HepG2 (cell line): ENCODE measurements at regions of chr13 and their contacts with region 1.

Region 1: GRCh38 chr13:33968520-33969507 is 150.9 kb downstream of the RFC3 start:
- DNase-seq: peak; percentile 96
- ATAC-seq: peak; percentile 97
- H3K4me3 ChIP-seq: peak overlapping the region; percentile 28 to 45 (median 40); a peak in 5 of 6 replicates
- H3K27ac ChIP-seq: peak overlapping the region; percentile 97
- H3K4me1 ChIP-seq: peaks cover 45% of the 10 kb centered on the region
- H3K27me3 ChIP-seq: no peaks in the 10 kb centered on the region
- CTCF ChIP-seq: no peak
- EP300 ChIP-seq: peak; percentile 83 to 98
- POLR2A ChIP-seq: no peak
- RAD21 ChIP-seq: no peak

Region 2: GRCh38 chr13:33728271-33729037 is 240.4 kb before region 1 on chr13:
- CTCF ChIA-PET with region 1: no interaction called
- POLR2A ChIA-PET with region 1: no interaction called
- in situ Hi-C with region 1: no loop called
- intact Hi-C with region 1: no loop called
- DNase-seq: no peak
- ATAC-seq: no peak
- H3K4me3 ChIP-seq: no peak overlapping the region
- H3K27ac ChIP-seq: no peak overlapping the region
- H3K4me1 ChIP-seq: peaks cover 16% of the 10 kb centered on the region
- H3K27me3 ChIP-seq: no peaks in the 10 kb centered on the region
- CTCF ChIP-seq: no peak
- EP300 ChIP-seq: no peak
- POLR2A ChIP-seq: no peak
- RAD21 ChIP-seq: no peak

Region 3: DNA sequence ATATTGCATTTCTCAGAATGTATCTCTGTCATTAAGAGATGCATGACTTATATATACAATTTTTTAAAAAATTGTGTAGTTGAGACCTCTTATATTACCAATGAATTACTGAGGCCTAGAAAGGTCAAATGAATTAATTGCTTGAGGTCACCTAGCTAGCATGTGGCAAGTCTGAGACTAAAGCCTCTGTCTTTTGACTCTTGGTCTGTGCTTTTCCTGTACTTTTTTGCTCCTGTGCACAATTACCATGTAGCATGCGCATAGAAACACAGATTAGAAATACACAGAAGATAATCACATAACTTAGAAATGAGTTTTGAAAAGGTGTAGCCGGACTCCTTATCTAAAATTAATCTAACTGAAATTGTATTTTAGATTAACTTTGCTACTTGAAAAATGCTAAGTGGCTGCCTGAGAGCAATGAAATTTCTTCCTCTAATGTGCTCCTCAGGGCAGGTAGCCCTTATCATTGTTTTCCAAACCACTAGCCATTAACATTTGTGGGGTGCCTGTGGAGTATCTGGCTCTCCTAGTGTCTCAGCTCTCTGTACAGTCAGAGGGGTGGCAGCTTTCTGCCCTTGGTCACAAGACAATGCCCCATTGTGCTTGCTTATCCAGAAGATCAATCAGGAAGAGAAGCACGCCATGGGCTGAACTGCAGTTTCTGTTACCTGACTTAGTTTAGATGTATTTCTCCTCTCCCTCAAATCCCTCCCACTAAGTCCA is 31.3 kb before region 1 on chr13:
- CTCF ChIA-PET with region 1: no interaction called
- POLR2A ChIA-PET with region 1: interaction called, 3 read pairs
- in situ Hi-C with region 1: no loop called
- intact Hi-C with region 1: loop called (anchors 1 kb)
- DNase-seq: peak; percentile 87
- ATAC-seq: peak; percentile 99
- H3K4me3 ChIP-seq: no peak overlapping the region
- H3K27ac ChIP-seq: peak overlapping the region; percentile 59
- H3K4me1 ChIP-seq: peaks cover 33% of the 10 kb centered on the region
- H3K27me3 ChIP-seq: no peaks in the 10 kb centered on the region
- CTCF ChIP-seq: no peak
- EP300 ChIP-seq: no peak; a peak in 1 of 4 replicates
- POLR2A ChIP-seq: no peak
- RAD21 ChIP-seq: no peak

Region 4: DNA sequence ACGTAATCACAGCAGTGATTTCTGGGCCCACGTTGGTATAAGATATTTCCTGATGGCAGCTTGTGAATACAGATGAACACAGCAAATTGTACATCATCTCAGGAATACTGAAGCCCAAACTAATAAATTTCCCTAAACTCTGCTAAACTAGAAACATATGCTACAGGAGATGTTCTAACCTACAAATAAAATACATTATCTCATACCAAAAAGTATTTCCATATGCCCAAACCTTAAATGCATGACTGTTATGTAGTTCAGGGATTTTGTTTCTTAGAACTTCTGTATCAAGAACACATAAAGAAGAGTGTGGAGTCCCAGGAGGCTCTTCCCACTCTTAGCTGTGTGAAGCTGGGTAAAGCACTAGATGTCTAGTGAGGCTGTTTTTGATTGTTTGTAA is 12.5 kb before region 1 on chr13:
- CTCF ChIA-PET with region 1: no interaction called
- POLR2A ChIA-PET with region 1: interaction called, 13 read pairs
- in situ Hi-C with region 1: no loop called
- intact Hi-C with region 1: no loop called
- DNase-seq: no peak
- ATAC-seq: no peak
- H3K4me3 ChIP-seq: no peak overlapping the region
- H3K27ac ChIP-seq: peak overlapping the region; percentile 82
- H3K4me1 ChIP-seq: peaks cover 54% of the 10 kb centered on the region
- H3K27me3 ChIP-seq: no peaks in the 10 kb centered on the region
- CTCF ChIP-seq: no peak
- EP300 ChIP-seq: no peak
- POLR2A ChIP-seq: no peak
- RAD21 ChIP-seq: no peak

Region 5: GRCh38 chr13:34003656-34004055 is 34.8 kb after region 1 on chr13:
- CTCF ChIA-PET with region 1: no interaction called
- POLR2A ChIA-PET with region 1: no interaction called
- in situ Hi-C with region 1: no loop called
- intact Hi-C with region 1: loop called (anchors 2 kb)
- DNase-seq: no peak
- ATAC-seq: no peak
- H3K4me3 ChIP-seq: no peak overlapping the region
- H3K27ac ChIP-seq: no peak overlapping the region
- H3K4me1 ChIP-seq: peaks cover 9% of the 10 kb centered on the region; the same call in 1 of the 2 replicates
- H3K27me3 ChIP-seq: no peaks in the 10 kb centered on the region
- CTCF ChIP-seq: no peak
- EP300 ChIP-seq: no peak
- POLR2A ChIP-seq: no peak
- RAD21 ChIP-seq: no peak

Region 6: DNA sequence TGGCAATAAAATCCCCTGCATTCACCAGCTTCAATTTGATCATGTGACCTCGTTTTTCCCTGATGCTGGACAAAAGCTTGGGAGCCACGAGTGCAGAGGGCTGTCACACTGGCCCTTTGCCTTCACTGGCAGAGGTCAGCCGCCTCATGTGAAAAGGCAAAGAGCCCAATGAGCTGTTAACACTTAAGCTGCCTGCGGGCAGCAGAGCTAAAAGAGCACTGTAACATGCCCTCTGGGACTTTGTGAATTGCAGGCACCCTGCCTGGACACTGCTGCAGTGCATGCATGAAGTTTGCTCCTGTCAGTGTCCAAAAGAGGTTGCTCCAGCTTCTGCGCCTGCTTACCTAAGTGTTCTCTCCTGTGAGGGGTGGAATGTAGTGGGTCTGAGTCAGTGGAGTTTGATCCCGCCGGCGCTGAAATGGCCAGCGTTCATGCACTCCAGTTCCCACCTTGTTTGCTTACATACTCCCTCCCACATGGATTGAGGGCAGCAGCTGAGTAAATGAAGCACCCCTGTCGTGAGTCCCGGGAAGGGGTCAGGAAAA is 42.8 kb after region 1 on chr13:
- CTCF ChIA-PET with region 1: no interaction called
- POLR2A ChIA-PET with region 1: interaction called, 15 read pairs
- in situ Hi-C with region 1: no loop called
- intact Hi-C with region 1: no loop called
- DNase-seq: peak; percentile 96
- ATAC-seq: peak; percentile 100
- H3K4me3 ChIP-seq: peak overlapping the region in 1 of 3 experiments; percentile 42; a peak in 3 of 6 replicates
- H3K27ac ChIP-seq: peak overlapping the region; percentile 84
- H3K4me1 ChIP-seq: peaks cover 59% of the 10 kb centered on the region
- H3K27me3 ChIP-seq: no peaks in the 10 kb centered on the region
- CTCF ChIP-seq: 0 out of 2 replicates have a peak, but pooled peaks have one; percentile 13
- EP300 ChIP-seq: peak; percentile 61 to 85
- POLR2A ChIP-seq: peak; percentile 63 to 67; a peak in 2 of 4 replicates
- RAD21 ChIP-seq: peak; percentile 62; the same call in 1 of the 2 replicates

Region 7: DNA sequence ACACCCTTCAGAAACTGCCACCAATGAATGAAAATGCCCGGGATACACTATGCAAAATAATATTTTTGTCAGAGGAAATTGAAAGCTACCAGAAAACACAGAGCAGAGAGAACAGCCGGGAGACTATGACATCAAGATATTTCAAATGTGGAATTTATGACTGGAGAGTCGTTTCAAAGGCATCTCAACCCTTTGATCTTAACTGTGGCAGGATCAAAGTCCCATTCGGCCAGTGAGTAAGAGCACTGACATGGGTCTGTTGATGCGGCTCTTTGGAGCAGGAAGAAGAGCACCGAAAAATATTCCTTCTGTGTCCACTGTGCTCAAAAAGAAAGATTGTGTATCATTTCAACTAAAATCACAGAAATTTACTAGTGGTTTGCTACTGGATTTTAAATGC is 51.1 kb after region 1 on chr13:
- CTCF ChIA-PET with region 1: no interaction called
- POLR2A ChIA-PET with region 1: interaction called, 10 read pairs
- in situ Hi-C with region 1: no loop called
- intact Hi-C with region 1: no loop called
- DNase-seq: peak; percentile 99
- ATAC-seq: peak; percentile 100
- H3K4me3 ChIP-seq: peak overlapping the region in 2 of 3 experiments; percentile 18 to 35; a peak in 4 of 6 replicates
- H3K27ac ChIP-seq: peak overlapping the region; percentile 95
- H3K4me1 ChIP-seq: peaks cover 58% of the 10 kb centered on the region
- H3K27me3 ChIP-seq: no peaks in the 10 kb centered on the region
- CTCF ChIP-seq: no peak
- EP300 ChIP-seq: peak; percentile 68 to 93; a peak in 2 of 4 replicates
- POLR2A ChIP-seq: peak in 1 of 2 experiments; percentile 19; a peak in 1 of 4 replicates
- RAD21 ChIP-seq: no peak; the same call in 1 of the 2 replicates

Region 8: DNA sequence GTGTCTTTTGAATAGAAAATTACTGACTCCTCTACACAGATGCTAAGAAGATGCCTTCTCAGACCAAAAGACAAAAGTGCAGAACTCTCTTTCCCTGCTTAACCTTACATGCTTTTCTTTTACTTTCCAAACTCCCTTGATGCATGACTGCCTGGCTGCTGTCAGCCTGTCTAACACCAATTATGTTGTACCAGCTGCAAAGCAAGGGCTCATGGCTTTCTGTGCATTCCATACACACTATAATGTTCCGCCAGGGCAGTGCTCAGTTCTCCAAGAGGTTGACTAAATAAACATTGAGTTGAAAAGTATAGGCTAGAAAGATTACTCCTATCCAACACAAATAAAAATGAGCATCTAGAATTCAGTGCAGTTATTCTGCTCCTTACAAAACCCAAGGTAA is 642.9 kb after region 1 on chr13:
- CTCF ChIA-PET with region 1: no interaction called
- POLR2A ChIA-PET with region 1: no interaction called
- in situ Hi-C with region 1: no loop called
- intact Hi-C with region 1: no loop called
- DNase-seq: no peak
- ATAC-seq: no peak
- H3K4me3 ChIP-seq: no peak overlapping the region
- H3K27ac ChIP-seq: no peak overlapping the region
- H3K4me1 ChIP-seq: no peaks in the 10 kb centered on the region
- H3K27me3 ChIP-seq: peaks cover 0 to 8% of the 10 kb centered on the region in 2 experiments; a peak in 1 of 5 replicates
- CTCF ChIP-seq: no peak
- EP300 ChIP-seq: no peak
- POLR2A ChIP-seq: no peak
- RAD21 ChIP-seq: no peak